ENCODE measurements at regions of chr16 and their contacts with region 1.

Region 1: DNA sequence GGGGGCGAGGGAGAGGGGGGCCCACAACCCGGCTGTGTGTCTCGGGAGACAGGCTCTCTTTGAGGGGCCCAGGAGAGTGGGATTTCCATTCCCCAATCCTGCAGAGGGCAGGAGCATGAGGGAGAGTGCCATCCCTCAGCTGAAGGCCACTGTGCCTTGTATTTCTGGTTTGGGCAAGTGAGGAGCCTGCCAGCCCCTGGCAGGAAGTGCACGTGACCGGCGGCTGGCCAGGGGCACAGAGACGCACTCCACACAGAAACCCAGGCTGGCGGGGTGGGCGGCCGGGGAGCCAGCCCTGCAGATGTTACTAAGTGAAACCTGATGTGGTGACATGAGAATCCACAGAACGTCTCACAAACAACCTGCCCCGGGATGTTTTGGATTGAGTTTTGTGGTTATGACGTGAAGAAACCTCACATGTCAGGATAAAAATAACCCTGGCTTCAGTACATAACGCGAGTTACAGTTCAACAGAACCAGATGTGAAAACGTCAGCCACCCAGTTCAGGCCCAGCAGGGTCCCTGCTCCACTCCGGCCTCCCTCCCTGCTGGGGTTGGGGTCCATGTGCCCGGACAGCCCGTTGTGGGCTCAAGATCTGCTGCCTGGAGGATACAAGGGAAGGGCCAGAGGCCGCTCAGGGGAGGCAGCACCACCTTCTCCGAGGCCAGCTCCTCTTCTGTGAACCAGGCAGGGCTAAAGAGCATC is 51.7 kb upstream of the MTSS2 start:
- DNase-seq: peak; percentile 88

Region 2: DNA sequence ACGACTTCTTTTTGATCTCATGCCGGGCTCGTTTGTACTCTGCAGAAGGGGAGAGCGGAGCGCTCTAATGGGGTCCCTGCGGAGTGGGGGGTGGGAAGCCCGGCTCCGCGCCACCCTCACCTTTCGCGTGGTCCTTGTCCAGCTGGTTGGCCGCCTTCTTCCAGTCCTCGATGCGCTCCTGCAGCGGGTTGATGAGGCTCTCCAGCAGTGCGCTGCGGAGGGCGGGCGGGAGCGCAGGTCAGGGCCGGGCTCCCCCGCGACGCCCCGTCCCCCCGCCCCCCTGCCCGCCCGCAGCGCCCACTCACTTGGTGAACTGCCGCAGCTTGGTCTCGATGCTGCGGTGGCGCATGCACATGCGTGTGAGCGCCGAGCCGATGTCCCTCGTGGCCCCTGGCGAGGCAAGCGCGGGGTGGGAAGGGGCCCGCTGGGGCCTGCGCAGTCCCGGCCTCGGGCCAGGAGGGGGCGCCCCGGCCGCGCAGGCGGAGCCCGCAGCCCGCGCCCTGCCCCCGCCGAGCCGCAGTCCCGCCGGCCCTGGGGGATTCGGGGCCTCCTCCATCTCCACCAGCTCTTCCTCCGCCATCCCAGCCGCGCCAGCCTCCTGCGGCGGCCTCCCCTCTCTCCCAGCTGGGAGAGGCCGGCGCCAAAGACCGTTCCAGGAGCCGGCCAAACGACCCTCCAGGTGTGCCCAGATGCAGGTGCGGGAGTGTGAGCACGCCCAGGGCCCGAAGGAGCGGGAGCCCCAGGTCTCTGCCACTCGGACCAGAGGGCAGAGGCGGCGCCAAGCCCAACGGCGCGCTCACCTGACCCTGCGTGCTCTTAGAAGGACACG is 57.6 kb before region 1 on chr16:
- intact Hi-C with region 1: loop called in 1 of 2 experiments (anchors 5 kb)
- DNase-seq: no peak

Region 3: DNA sequence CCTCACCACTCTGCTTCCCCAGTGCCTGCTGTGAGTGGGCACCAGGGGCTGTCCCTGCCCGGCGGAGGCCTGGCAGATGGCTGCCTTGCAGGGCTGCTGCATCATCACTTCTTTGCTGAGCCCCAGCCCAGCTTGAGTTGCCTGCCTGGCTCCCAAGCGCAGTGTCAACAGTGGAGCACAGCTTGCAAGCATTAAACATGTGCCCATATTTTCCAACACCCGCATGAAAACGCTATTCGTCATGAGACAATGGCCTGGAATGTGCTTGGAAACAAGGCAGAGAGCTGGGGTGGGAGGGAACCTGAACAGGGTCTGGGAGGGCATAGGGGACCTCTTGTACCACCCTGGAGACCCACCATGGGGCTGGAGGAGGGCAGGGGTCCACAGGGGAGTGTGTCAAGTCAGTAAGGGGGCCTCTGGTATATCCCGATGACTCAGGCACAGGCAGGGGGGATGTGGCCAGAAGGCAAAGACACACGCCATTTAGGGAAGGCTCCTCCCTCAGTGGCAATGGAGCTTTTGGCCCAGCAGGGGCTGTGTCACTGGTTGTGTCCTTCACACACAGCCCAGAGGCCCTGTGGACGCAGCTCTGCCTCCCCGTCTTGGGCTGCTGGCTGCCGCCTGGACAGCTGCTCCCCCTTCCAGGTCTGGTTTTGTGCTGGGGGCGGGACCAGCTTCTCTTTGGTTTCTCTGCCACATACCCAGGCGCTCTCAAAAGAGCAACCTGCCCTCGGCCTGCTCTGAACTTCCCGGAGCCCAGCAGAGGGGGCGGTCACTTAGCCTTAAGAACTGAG is 34.3 kb before region 1 on chr16:
- intact Hi-C with region 1: loop called in 1 of 2 experiments (anchors 5 kb)
- DNase-seq: peak; percentile 93

Region 4: DNA sequence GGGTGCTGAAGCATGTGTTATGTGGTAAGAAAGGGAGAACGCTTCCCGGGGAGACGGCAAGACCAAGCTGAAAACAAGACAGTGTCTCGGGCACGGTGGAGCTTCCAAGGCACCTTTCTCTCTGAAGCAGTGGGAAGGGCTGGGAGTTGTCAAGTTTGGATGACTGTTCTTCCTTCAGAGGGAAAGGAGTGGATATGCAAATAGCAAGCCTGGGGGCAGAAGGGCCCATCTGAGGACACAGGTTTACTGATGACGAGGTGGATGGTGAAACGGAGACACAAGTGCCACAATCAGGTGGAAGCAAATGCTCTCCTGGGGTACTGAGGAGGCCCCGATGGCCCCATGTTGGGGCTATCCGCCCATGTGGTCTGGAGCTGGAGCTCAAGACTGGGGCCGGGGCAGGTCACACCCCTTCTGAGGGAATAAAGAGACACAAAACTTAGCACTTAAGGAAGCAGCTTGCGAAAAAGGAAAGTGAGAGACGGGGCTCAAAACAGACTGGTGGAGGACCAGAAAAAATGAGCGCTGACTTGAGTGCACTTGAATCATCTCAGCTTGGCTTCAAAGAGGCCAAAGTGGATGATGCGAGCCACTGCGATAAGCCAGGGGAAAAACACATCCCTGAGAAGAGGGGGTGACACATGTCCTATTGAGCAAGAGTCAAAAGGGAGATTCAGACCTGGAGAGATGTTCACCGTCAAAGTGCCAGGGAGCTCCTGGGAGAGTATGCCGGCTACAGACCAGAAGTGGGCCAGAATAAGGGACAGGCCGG is 16.9 kb before region 1 on chr16:
- intact Hi-C with region 1: loop called in 1 of 2 experiments (anchors 2 kb)
- DNase-seq: no peak

Region 5: GRCh38 chr16:70757183-70757582 is 19.7 kb after region 1 on chr16:
- intact Hi-C with region 1: loop called in 1 of 2 experiments (anchors 1 kb)
- DNase-seq: no peak

Region 6: DNA sequence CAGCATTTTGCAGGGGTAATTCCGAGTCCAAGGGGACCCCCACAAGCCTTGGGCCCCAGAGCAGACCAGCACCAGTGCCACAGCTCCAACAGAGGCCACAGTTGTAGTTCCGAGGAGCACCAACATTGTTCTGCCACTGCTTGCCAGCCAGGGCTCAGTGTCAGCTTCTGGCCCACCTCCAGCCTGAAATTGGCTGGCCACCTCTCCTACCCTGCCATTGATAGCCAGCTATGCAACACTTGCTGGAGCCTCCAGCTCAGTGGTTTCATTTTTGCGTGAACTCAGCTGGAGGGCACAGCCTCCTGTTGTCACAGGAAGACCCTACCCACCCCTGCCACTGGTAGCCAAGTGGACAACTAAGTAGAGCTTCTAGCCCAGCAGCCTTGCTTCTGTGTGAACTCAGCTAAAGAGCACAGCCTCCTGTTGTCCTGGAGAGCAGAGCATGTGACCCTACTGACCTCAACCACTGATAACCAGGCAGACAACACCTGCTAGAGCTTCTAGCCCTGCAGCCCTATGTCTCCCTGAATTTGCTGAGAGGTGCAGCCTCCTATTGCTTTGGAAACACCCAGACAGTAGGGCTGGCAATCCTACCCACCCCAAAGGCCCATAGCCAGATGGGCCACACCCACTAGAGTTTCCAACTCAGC is 468.1 kb after region 1 on chr16:
- intact Hi-C with region 1: no loop called
- DNase-seq: no peak

Measured in posterior vena cava (tissue), 2 donors.